BJ (cell line): ENCODE measurements at regions of chr6 and their contacts with region 1.

Region 1: GRCh38 chr6:30877419-30878371 is 6.6 kb upstream of the DDR1 start:
- DNase-seq: peak; percentile 34
- H3K4me3 ChIP-seq: peak overlapping the region; percentile 12; the same call in 1 of the 2 replicates
- H3K27me3 ChIP-seq: no peaks in the 10 kb centered on the region
- CTCF ChIP-seq: peak; percentile 91

Region 2: GRCh38 chr6:30828027-30828960 is 49.4 kb before region 1 on chr6:
- CTCF ChIA-PET with region 1: interaction called, 274 read pairs
- POLR2A ChIA-PET with region 1: interaction called, 5 read pairs
- DNase-seq: peak; percentile 69
- H3K4me3 ChIP-seq: no peak overlapping the region
- H3K27me3 ChIP-seq: no peaks in the 10 kb centered on the region
- CTCF ChIP-seq: peak; percentile 92

Region 3: GRCh38 chr6:30836431-30836866 is 41.2 kb before region 1 on chr6:
- CTCF ChIA-PET with region 1: interaction called, 274 read pairs
- POLR2A ChIA-PET with region 1: no interaction called
- DNase-seq: peak; percentile 49
- H3K4me3 ChIP-seq: no peak overlapping the region
- H3K27me3 ChIP-seq: no peaks in the 10 kb centered on the region; the same call in 1 of the 2 replicates
- CTCF ChIP-seq: no peak

Region 4: GRCh38 chr6:30926644-30927043 is 48.9 kb after region 1 on chr6:
- CTCF ChIA-PET with region 1: no interaction called
- POLR2A ChIA-PET with region 1: no interaction called
- DNase-seq: no peak
- H3K4me3 ChIP-seq: no peak overlapping the region
- H3K27me3 ChIP-seq: no peaks in the 10 kb centered on the region
- CTCF ChIP-seq: no peak

Region 5: GRCh38 chr6:30981942-30982772 is 104.5 kb after region 1 on chr6:
- CTCF ChIA-PET with region 1: no interaction called
- POLR2A ChIA-PET with region 1: no interaction called
- DNase-seq: peak; percentile 38
- H3K4me3 ChIP-seq: no peak overlapping the region; the same call in 1 of the 2 replicates
- H3K27me3 ChIP-seq: peaks cover 2% of the 10 kb centered on the region
- CTCF ChIP-seq: peak; percentile 54